ENCODE measurements at regions of chr17 and their contacts with region 1.

Region 1: GRCh38 chr17:39244600-39245570 is 19.1 kb upstream of the STAC2 start:
- DNase-seq: peak; percentile 88 to 91
- H3K4me3 ChIP-seq: no peak overlapping the region
- H3K27ac ChIP-seq: no peak overlapping the region
- H3K4me1 ChIP-seq: peaks cover 0 to 6% of the 10 kb centered on the region in 2 donors
- H3K27me3 ChIP-seq: no peaks in the 10 kb centered on the region
- CTCF ChIP-seq: peak; percentile 89 to 94 (median 90)
- POLR2A ChIP-seq: no peak

Region 2: DNA sequence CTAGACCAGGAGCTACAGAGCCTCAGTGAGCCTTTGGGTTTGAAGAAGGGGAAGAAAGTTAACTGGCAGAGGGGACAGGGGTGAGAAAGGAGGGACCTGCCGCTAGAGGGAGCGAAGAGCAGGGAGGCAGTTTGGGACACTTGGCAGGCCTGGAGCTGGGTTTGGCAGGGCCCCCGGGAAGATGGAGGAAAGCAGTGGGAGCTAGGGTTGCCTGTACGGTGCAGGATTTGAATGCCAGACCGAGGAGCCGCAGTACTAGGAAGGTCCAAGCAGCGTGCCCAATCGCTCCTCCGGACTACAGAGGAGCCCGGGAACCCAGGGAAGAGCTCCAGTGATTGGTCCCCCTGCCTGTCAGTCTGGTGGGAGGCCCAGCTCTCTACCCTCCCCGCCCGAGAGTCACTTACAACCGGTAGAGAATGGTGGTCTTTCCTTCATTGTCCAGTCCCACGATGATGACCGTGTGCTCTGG is 80.2 kb before region 1 on chr17:
- intact Hi-C with region 1: loop called (anchors 10 kb)
- DNase-seq: peak; percentile 74 to 75
- H3K4me3 ChIP-seq: peak overlapping the region in 1 of 3 donors; percentile 36
- H3K27ac ChIP-seq: no peak overlapping the region
- H3K4me1 ChIP-seq: peaks cover 9 to 12% of the 10 kb centered on the region in 2 donors
- H3K27me3 ChIP-seq: peaks cover 4% of the 10 kb centered on the region
- CTCF ChIP-seq: peak; percentile 21 to 75 (median 60)
- POLR2A ChIP-seq: no peak

Region 3: GRCh38 chr17:39186481-39187002 is 58.3 kb before region 1 on chr17:
- intact Hi-C with region 1: no loop called
- DNase-seq: no peak
- H3K4me3 ChIP-seq: no peak overlapping the region
- H3K27ac ChIP-seq: no peak overlapping the region
- H3K4me1 ChIP-seq: no peaks in the 10 kb centered on the region
- H3K27me3 ChIP-seq: no peaks in the 10 kb centered on the region
- CTCF ChIP-seq: no peak
- POLR2A ChIP-seq: no peak

Region 4: DNA sequence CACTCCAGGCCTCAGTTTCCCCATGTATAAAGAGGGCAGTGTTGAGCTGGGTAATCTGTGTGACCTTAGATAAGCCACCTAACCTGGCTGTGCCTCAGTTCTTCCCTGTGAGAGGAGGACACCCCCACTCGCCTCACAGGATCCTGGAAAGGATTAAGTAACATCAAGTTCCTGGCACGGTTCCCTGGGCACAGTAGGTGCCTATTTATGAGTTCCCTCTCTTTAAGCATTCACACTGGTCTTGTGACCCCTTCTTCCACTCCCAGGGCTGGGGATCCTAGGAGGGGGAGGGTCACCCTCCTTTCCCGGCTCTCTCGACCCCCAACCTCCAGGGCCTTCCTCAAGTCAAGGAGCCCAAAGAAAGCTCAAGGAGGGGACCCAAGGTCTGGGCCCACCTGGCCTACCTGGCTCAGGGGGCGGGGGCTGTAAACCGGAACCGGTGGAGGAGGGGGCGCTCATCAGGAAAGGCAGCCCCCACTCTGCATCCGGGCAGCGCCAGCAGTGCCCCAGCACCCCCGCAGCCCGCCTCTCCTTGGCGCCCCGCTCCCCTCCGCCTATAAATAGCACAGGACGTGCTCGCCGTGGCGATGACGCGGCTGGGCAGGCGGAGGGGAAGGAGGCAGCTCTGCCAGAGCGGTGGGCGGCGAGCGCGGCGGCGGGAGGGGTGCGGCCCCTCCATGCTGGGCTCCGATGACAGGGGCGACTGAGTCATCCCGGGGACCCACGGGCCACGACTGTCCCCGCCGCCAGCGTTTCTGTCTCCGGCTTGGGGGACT is 35.4 kb before region 1 on chr17:
- intact Hi-C with region 1: loop called (anchors 5 kb)
- DNase-seq: peak; percentile 83 to 85
- H3K4me3 ChIP-seq: peak overlapping the region in 1 of 3 donors; percentile 31
- H3K27ac ChIP-seq: peak overlapping the region in 2 of 3 donors; percentile 5 to 58
- H3K4me1 ChIP-seq: peaks cover 29 to 52% of the 10 kb centered on the region in 2 donors
- H3K27me3 ChIP-seq: no peaks in the 10 kb centered on the region
- CTCF ChIP-seq: no peak
- POLR2A ChIP-seq: peak in 1 of 2 donors; percentile 43

Region 5: GRCh38 chr17:39284685-39285084 is 39.8 kb after region 1 on chr17:
- intact Hi-C with region 1: no loop called
- DNase-seq: no peak
- H3K4me3 ChIP-seq: no peak overlapping the region
- H3K27ac ChIP-seq: no peak overlapping the region
- H3K4me1 ChIP-seq: peaks cover 0 to 8% of the 10 kb centered on the region in 2 donors
- H3K27me3 ChIP-seq: no peaks in the 10 kb centered on the region
- CTCF ChIP-seq: no peak
- POLR2A ChIP-seq: no peak

Region 6: DNA sequence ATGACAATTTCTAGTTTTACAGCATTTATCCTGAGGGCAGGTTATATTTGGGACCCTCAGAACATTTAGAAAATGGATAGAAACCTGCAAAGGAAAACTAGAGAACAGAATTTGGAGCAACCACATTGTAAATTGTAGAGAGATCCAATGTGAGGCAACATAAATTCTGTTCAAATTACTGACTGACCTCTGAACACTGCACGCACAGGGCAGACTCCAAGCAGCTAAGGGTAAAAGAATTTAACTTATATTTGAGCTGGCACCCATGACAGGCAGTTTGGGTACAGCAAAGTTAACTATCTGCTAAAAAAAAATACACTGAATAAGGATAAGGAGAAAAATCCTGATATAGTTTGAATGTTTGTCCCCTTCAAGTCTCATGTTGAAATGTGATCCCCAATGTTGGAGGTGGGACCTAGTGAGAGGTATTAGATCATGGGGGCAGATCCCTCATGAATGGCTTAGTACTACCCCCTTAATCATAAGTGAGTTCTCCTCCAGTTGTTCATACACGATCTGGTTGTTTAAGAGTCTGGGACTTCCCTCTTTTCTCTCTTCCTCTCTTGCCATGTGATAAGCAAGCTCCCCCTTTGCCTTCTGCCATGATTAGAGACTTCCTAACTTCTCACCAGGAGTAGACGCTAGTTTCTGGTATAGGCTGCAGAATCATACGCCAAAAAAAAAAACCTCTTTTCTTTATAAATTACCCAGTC is 80.8 kb after region 1 on chr17:
- intact Hi-C with region 1: no loop called
- DNase-seq: no peak
- H3K4me3 ChIP-seq: no peak overlapping the region
- H3K27ac ChIP-seq: no peak overlapping the region
- H3K4me1 ChIP-seq: peaks cover 6 to 10% of the 10 kb centered on the region in 2 donors
- H3K27me3 ChIP-seq: no peaks in the 10 kb centered on the region
- CTCF ChIP-seq: no peak
- POLR2A ChIP-seq: no peak

Region 7: GRCh38 chr17:39553341-39553945 is 308.6 kb after region 1 on chr17:
- intact Hi-C with region 1: no loop called
- DNase-seq: no peak
- H3K4me3 ChIP-seq: no peak overlapping the region
- H3K27ac ChIP-seq: no peak overlapping the region
- H3K4me1 ChIP-seq: no peaks in the 10 kb centered on the region
- H3K27me3 ChIP-seq: no peaks in the 10 kb centered on the region
- CTCF ChIP-seq: no peak
- POLR2A ChIP-seq: no peak